Ascending aorta (tissue), 2 donors: ENCODE measurements at regions of chr5 and their contacts with region 1.

Region 1: DNA sequence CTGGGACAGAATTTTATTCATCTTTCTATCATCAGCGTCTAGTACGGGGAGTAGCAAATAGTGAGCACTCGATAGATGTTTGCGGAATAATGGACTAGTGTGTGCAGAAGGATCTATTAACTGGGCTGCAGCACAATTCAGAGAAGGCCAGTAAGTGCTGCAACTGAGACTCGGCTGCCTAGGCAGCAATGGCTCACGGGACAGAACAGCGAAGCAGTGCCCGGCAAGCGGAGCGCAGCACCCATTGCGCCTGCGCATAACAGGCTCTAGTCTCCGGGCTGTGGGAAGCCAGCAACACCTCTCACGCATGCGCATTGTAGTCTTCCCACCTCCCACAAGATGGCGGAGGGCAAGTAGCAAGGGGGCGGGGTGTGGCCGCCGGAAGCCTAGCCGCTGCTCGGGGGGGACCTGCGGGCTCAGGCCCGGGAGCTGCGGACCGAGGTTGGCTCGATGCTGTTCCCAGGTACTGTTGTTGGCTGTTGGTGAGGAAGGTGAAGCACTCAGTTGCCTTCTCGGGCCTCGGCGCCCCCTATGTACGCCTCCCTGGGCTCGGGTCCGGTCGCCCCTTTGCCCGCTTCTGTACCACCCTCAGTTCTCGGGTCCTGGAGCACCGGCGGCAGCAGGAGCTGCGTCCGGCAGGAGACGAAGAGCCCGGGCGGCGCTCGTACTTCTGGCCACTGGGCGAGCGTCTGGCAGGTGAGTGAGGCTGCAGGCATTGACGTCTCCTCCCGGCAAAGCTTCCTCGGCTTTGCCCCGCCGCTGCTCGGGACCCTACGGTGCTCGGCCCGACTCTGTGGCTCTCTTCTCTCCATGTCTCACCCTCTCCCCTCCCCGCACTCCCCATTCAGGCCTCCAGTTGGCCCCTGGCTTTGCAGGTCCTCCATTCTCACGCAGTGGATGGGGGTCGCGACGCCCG is 30.2 kb upstream of the APC start:
- DNase-seq: peak; percentile 92 to 99
- H3K4me3 ChIP-seq: peak overlapping the region; percentile 82 to 92
- H3K27ac ChIP-seq: peak overlapping the region; percentile 89 to 91
- H3K4me1 ChIP-seq: peaks cover 0 to 20% of the 10 kb centered on the region in 2 donors
- H3K27me3 ChIP-seq: no peaks in the 10 kb centered on the region
- CTCF ChIP-seq: peak in 1 of 3 experiments; percentile 15

Region 2: GRCh38 chr5:112551419-112552032 is 155.9 kb before region 1 on chr5:
- intact Hi-C with region 1: loop called (anchors 5 kb)
- DNase-seq: no peak
- H3K4me3 ChIP-seq: no peak overlapping the region
- H3K27ac ChIP-seq: no peak overlapping the region
- H3K4me1 ChIP-seq: peaks cover 0 to 10% of the 10 kb centered on the region in 2 donors
- H3K27me3 ChIP-seq: no peaks in the 10 kb centered on the region
- CTCF ChIP-seq: peak; percentile 62 to 86 (median 63)

Region 3: GRCh38 chr5:112616812-112617547 is 90.5 kb before region 1 on chr5:
- intact Hi-C with region 1: no loop called
- DNase-seq: no peak
- H3K4me3 ChIP-seq: no peak overlapping the region
- H3K27ac ChIP-seq: no peak overlapping the region
- H3K4me1 ChIP-seq: no peaks in the 10 kb centered on the region
- H3K27me3 ChIP-seq: no peaks in the 10 kb centered on the region
- CTCF ChIP-seq: no peak

Region 4: DNA sequence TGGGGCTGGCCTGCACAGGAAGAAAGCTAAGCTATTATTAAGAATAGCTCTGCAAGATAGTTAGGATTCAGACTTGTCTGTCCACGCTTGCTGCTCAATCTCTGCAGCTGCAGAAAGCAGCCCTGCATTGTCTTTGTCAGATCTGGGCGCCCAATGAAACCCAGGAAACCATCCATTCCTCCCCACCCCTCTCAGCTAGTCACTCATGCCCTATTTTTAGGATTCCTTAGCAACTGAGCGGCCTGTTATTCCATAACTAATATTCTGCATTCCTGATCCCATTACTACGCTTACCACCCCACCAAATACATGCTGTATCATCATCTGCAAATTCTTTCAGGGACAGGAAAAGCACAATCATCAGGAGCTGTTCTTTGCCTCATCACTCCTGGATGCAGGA is 22.7 kb before region 1 on chr5:
- intact Hi-C with region 1: loop called (anchors 1 kb)
- DNase-seq: peak in 1 of 2 donors; percentile 74
- H3K4me3 ChIP-seq: no peak overlapping the region
- H3K27ac ChIP-seq: peak overlapping the region; percentile 71 to 73
- H3K4me1 ChIP-seq: peaks cover 0 to 17% of the 10 kb centered on the region in 2 donors
- H3K27me3 ChIP-seq: no peaks in the 10 kb centered on the region
- CTCF ChIP-seq: no peak

Region 5: DNA sequence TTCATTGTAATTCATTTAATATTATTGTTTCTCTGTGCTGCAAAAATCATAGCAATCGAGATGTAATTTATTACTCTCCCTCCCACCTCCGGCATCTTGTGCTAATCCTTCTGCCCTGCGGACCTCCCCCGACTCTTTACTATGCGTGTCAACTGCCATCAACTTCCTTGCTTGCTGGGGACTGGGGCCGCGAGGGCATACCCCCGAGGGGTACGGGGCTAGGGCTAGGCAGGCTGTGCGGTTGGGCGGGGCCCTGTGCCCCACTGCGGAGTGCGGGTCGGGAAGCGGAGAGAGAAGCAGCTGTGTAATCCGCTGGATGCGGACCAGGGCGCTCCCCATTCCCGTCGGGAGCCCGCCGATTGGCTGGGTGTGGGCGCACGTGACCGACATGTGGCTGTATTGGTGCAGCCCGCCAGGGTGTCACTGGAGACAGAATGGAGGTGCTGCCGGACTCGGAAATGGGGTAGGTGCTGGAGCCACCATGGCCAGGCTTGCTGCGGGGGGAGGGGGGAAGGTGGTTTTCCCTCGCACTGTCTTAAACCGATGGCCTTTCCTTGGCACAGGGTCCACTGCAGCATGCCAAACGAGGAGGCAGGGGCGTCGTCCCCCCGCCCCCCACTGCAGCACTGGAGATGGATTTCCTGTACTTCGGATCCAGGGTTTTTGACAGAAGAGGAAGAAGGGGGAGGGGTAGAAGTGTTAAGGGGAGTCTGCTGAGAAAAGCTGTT is 30.2 kb after region 1 on chr5 and contains the start of gene APC:
- intact Hi-C with region 1: loop called (anchors 1 kb)
- DNase-seq: peak; percentile 84 to 97
- H3K4me3 ChIP-seq: peak within 1 kb of the TSS; percentile 71 to 78
- H3K27ac ChIP-seq: peak within 1 kb of the TSS; percentile 71 to 72
- H3K4me1 ChIP-seq: peaks cover 0 to 18% of the 10 kb centered on the region in 2 donors
- H3K27me3 ChIP-seq: no peaks in the 10 kb centered on the region
- CTCF ChIP-seq: peak in 1 of 3 experiments; percentile 27
- total RNA-seq, gene APC: 197 TPM

Region 6: DNA sequence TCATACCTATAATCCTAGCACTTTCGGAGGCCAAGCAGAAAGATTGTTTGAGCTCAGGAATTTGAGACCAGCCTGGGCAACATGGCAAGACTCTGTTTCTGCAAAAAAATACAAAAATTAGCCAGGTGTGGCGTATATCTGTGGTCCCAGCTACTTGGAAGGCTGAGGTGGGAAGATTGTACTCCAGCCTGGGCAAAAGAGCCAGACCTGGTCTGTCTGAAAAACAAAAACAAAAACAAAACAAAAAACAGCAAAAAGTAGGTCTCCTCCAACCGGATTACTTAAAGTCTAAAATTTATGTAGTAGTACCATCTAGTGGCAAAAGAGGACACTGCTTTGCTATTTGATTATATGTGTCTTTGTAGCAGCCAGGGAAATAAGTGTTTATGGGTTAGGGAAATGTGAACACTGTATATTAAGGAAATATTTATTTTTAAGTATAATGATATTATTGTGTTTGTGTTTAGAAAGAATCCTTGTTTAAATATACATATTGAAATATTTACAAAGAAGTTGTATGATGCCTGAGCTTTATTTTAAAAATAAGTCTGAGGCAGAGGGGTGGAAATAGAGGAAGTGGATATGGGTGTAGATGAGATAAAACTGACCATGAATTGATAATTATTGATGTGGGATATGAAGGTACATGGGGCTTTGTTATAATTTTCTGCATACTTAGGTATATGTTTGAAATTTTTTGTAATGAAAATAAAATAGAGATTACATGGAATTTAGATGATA is 50.2 kb after region 1 on chr5:
- intact Hi-C with region 1: loop called (anchors 5 kb)
- DNase-seq: no peak
- H3K4me3 ChIP-seq: peak overlapping the region; percentile 16 to 20
- H3K27ac ChIP-seq: peak overlapping the region in 1 of 2 donors; percentile 37
- H3K4me1 ChIP-seq: peaks cover 0 to 7% of the 10 kb centered on the region in 2 donors
- H3K27me3 ChIP-seq: no peaks in the 10 kb centered on the region
- CTCF ChIP-seq: peak; percentile 55 to 84 (median 57)

Region 7: DNA sequence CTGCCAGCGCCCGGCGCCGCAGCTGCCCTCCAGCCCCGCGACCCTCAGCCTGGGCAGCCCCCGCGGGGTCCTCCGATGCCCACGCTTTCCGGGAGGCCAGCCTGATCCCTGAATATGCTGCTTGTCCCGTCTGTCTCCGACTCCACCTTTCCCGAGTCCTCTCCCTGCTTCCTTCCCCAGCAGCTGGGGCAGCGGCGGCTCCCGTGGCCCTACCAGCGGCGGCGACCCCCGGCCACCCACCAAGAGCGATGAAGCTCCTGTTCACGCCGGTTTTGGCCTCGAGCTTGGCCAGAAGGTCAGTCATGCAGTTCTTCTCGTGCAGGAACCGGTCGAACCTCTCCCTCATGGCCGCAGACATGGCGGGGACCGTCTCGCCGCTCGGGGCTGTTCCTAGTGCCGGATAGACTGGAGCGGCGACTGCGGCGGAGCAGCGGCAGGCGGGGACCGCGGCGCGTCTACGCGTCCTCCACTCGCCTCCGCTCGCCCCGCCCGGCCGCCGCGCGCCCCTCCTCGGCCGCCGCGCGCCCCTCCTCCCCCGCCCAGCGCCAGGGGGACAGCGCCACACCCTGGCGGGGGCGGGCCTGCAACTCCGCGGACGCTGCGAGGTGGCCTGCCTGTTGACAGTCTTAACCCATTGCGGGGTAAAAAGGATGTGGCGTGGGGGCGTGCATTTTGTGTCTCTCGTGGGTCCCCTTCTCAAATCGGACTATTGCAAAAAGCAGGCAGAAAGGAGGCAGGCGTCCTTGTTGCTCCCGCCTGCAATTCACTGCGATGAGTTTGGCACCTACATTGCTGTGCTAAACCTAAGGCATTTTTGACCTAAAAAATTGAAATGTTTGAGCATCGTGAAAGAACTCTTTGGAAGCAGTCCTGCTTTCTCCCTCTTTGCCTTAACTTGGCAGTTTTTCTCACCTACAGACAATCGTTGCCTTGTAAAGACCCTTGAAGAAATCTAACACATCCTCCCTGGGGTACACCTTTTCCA is 214.7 kb after region 1 on chr5 and contains the start of gene REEP5:
- intact Hi-C with region 1: loop called (anchors 5 kb)
- DNase-seq: peak; percentile 40 to 90
- H3K4me3 ChIP-seq: peak within 1 kb of the TSS; percentile 93 to 94
- H3K27ac ChIP-seq: peak within 1 kb of the TSS; percentile 97 to 99
- H3K4me1 ChIP-seq: peaks cover 8 to 33% of the 10 kb centered on the region in 2 donors
- H3K27me3 ChIP-seq: no peaks in the 10 kb centered on the region
- CTCF ChIP-seq: peak; percentile 40 to 90 (median 59)
- total RNA-seq, gene REEP5: 49.7 TPM

Region 8: DNA sequence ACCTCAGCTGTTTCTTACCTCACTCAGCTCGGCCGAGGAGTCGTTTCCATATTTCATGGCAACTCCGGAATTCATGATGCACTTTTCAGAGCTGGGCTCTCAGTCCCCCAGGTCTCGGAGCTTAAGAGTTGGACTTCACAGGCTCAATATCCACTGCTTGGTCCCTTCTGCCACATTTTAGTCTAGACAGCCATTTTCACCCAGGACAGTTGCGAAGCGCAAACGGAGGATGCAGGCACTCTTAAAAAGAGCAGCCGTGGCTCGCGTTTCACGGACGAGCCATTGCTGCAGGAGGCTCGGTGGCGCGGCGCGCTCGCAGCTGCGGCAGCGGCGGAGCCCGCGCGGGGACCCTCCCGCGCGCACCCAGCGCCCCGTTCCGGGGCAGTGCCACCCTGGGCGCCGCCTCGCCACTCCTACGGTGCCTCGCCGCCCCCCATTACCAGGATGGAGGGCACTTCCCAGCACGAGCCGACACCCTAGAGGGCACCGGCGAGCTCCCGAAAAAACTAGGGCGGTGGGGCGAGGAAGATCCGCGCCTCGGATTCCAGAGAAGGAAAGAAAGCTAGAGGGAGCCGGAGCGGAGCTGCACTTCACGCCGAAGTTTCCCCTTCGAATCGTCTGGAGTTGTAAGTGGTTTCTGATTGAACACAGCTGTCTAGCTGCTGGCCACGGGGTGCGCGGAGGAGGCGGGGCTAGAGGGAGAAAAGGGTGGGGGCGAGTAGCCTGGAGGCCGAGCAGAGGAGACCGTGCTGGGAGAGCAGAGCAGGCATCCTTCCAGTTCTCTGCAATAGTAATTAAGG is 587.1 kb after region 1 on chr5:
- intact Hi-C with region 1: loop called (anchors 10 kb)
- DNase-seq: peak; percentile 66 to 90
- H3K4me3 ChIP-seq: peak overlapping the region; percentile 80 to 87
- H3K27ac ChIP-seq: peak overlapping the region; percentile 74 to 94
- H3K4me1 ChIP-seq: peaks cover 0 to 6% of the 10 kb centered on the region in 2 donors
- H3K27me3 ChIP-seq: no peaks in the 10 kb centered on the region
- CTCF ChIP-seq: peak in 1 of 3 experiments; percentile 6